WTC11 (cell line): ENCODE measurements at regions of chr13 and their contacts with region 1.

Region 1: GRCh38 chr13:113490496-113491417 is at the start of gene DCUN1D2:
- DNase-seq: peak; percentile 88
- ATAC-seq: peak; percentile 70
- H3K4me3 Mint-ChIP-seq: peak within 1 kb of the TSS; percentile 86
- H3K27ac Mint-ChIP-seq: peak within 1 kb of the TSS; percentile 77
- H3K4me1 Mint-ChIP-seq: peaks cover 75% of the 10 kb centered on the region
- H3K27me3 Mint-ChIP-seq: no peaks in the 10 kb centered on the region
- CTCF ChIP-seq: no peak
- total RNA-seq, gene DCUN1D2: 34.0 to 42.5 TPM (median 36.0 TPM) in 3 replicates

Region 2: GRCh38 chr13:113458253-113459065 is 32.3 kb before region 1 on chr13:
- CTCF ChIA-PET with region 1: interaction called, 22 read pairs
- POLR2A ChIA-PET with region 1: no interaction called
- DNase-seq: peak; percentile 42
- ATAC-seq: peak; percentile 55
- H3K4me3 Mint-ChIP-seq: no peak overlapping the region
- H3K27ac Mint-ChIP-seq: peak overlapping the region; percentile 87
- H3K4me1 Mint-ChIP-seq: no peaks in the 10 kb centered on the region
- H3K27me3 Mint-ChIP-seq: no peaks in the 10 kb centered on the region
- CTCF ChIP-seq: no peak

Region 3: DNA sequence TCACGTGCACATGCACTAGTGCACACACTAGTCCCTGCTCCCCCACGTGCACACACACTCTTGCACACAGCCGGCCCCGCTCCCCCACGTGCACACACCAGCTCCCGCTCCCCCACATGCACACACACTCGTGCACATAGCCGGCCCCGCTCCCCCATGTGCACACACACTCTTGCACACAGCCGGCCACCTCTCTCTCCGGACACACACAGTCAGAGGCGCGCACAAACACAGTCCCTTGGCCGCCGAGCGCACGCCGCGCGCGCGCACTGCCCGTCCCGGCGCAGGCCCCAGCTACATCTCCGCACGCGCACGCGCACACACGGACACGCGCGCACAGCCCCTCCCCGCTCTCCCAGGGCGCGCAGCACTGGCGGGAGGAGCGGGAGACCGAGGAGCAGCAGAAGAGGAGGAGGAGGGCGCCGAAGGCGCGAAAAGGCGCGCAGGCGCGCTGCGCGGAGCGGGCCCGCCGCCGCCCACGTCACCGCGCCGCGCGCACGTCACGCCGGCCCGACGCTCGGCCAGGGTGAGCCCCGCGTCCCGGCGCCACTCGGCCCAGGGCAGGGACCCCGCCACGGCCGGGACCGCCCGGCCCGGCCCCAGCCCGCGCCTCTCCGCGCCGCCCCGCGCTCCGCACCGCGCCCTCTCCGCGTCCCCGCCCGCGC is 93.6 kb after region 1 on chr13 and contains the start of gene TFDP1:
- CTCF ChIA-PET with region 1: no interaction called
- POLR2A ChIA-PET with region 1: no interaction called
- DNase-seq: peak; percentile 82
- ATAC-seq: peak; percentile 90
- H3K4me3 Mint-ChIP-seq: peak within 1 kb of the TSS; percentile 81
- H3K27ac Mint-ChIP-seq: no peak within 1 kb of the TSS
- H3K4me1 Mint-ChIP-seq: peaks cover 12% of the 10 kb centered on the region
- H3K27me3 Mint-ChIP-seq: no peaks in the 10 kb centered on the region
- CTCF ChIP-seq: no peak
- total RNA-seq, gene TFDP1: 52.6 to 61.2 TPM (median 54.1 TPM) in 3 replicates